ENCODE measurements at regions of chr1 and their contacts with region 1.

Region 1: DNA sequence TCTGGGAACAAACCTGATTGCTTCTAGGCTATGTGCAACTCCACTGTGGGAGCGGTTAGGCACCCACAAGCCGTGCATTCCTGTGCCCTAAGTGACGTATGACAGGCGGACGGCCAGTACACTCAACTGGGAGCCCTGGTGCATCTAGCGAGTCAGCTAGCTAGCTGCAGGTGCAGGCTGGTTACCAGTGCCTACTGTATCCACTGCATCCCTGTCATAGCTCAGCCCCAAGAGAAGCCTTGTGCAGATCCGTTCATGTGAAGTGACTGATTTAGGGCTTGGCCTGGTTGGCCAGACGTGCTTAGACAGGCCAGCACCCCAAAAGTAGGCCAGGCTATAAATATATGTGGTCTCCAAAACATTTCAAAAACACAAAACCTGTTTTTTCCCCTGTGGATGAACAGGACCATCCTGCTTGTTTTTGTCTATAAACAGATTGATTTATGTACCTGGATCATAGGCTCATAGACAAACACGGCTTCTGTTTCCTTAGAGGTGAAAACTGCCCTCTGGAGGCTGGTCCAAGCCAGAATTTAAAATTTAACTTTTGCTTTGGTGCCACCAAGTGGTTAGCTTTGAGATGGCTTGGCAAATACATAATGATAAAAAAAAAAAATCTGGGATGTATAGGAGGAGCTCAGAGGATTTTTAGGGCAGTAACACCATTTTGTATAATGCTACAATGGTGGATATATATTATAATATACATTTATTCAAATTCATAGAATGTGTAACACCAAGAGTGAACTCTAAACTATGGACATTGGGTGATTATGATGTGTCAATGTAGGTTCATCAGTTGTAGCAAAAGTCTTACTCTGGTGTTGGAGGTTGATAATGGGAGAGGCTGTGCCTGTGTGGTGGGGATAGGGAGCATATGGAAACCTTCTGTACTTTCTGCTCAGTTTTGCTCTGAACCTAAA is 68.5 kb downstream of the GIPC2 start:
- DNase-seq: peak; percentile 73
- H3K4me3 ChIP-seq: no peak overlapping the region
- H3K27ac ChIP-seq: peak overlapping the region; percentile 38
- H3K4me1 ChIP-seq: peaks cover 16% of the 10 kb centered on the region
- H3K27me3 ChIP-seq: no peaks in the 10 kb centered on the region
- CTCF ChIP-seq: peak; percentile 63 to 89

Region 2: DNA sequence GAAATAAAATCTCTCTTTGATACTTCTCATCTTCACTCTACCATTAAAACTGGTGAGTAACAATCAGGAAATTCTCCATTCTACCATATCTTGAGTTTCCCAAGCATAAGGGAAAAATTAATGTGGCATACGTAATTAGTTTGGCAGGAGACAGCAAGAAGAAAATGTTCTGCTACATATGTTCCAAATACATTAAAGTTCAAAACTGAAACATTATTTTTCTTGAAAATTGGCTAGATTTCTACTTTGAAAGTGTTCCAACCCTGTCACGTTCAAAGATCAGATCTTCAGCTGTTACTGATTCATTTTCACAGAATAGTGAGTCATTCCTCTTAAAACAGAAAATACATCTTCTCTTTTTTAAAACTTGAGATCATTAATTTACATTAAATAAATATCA is 943.6 kb before region 1 on chr1:
- CTCF ChIA-PET with region 1: no interaction called
- dilution Hi-C with region 1: no loop called
- in situ Hi-C with region 1: loop called in 1 of 2 experiments (anchors 25 kb)
- intact Hi-C with region 1: no loop called
- DNase-seq: no peak
- H3K4me3 ChIP-seq: no peak overlapping the region
- H3K27ac ChIP-seq: no peak overlapping the region
- H3K4me1 ChIP-seq: no peaks in the 10 kb centered on the region
- H3K27me3 ChIP-seq: no peaks in the 10 kb centered on the region
- CTCF ChIP-seq: no peak

Region 3: GRCh38 chr1:77744576-77744975 is 369.7 kb before region 1 on chr1:
- CTCF ChIA-PET with region 1: no interaction called
- dilution Hi-C with region 1: no loop called
- in situ Hi-C with region 1: no loop called
- intact Hi-C with region 1: loop called (anchors 10 kb)
- DNase-seq: no peak
- H3K4me3 ChIP-seq: no peak overlapping the region
- H3K27ac ChIP-seq: no peak overlapping the region
- H3K4me1 ChIP-seq: no peaks in the 10 kb centered on the region
- H3K27me3 ChIP-seq: no peaks in the 10 kb centered on the region
- CTCF ChIP-seq: peak in 1 of 2 donors; percentile 20

Region 4: DNA sequence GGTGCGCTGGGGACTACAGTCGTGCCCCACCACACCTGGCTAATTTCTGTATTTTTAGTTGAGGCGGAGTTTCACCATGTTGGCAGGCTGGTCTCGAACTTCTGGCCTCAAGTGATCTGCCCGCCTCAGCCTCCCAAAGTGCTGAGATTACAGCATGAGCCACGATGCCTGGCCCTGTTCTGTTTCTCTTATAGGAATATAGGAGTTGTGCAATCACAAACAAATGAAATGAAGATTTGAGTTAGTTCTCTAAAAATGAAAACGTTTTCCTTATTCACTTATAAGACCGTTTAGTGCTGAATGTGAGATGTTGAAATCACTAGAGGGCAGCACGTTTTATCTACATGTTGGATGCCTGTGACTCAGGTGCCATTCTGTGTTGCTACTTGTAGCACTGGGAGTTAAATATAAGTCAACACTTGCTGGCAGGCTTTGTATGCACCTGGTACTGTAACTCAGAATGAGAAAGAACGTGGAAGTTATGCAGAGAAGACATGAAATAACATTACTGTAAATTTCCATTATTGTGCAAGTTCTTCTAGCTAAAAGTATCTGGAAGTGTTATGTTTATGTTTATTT is 289.1 kb before region 1 on chr1:
- CTCF ChIA-PET with region 1: no interaction called
- dilution Hi-C with region 1: no loop called
- in situ Hi-C with region 1: loop called in 1 of 2 experiments (anchors 25 kb)
- intact Hi-C with region 1: loop called (anchors 1 kb)
- DNase-seq: peak; percentile 95
- H3K4me3 ChIP-seq: no peak overlapping the region
- H3K27ac ChIP-seq: peak overlapping the region; percentile 69
- H3K4me1 ChIP-seq: peaks cover 18% of the 10 kb centered on the region
- H3K27me3 ChIP-seq: no peaks in the 10 kb centered on the region
- CTCF ChIP-seq: peak; percentile 8 to 47

Region 5: DNA sequence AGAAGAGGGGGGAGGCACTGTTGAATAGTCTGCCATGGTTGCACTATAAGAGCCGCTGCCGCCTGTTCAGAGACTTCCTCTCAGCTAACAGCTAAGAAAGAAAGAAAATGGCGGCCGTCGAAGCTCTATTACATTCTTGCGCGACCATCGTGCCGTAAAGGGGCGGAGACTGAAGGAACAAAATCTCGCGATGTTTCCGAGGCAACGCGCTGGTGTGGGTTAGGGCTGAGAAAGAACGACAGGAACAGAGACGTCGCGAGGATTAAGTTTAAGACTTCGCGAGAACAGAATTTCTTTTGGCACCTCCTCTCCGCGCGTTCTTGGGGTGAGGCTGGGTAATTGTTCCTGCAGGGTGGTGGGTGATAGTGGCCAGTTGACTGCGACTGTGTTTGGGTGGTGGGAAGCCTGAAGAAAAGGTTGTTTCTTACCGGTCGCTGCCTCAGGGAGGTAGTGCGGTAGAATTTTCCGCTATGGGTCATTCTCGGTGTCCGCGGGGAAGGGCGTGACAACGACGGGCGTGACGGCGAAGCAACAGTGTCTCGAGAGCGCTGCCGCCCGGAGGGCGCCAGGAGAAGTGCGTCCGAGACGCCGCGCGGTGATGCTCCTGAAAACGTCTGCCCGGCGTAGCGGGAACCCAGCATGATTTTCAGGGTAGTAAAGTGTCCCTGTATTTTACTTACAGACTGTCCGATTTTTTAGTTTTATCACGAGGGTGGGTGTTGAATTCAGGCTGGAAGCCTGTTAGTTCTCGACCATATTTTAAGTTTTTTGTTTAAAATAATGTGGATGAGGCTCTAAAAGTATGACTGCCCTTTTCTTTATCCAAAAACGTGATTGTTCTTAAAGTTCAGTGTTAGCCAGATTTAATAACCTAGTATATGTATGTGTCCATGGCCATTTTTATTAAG is 135.1 kb before region 1 on chr1 and contains the start of gene FUBP1:
- CTCF ChIA-PET with region 1: interaction called, 3 read pairs
- dilution Hi-C with region 1: no loop called
- in situ Hi-C with region 1: loop called in 1 of 2 experiments (anchors 5 kb)
- intact Hi-C with region 1: loop called (anchors 1 kb)
- DNase-seq: peak; percentile 98
- H3K4me3 ChIP-seq: peak within 1 kb of the TSS; percentile 57 to 93 (median 75)
- H3K27ac ChIP-seq: peak within 1 kb of the TSS; percentile 99
- H3K4me1 ChIP-seq: peaks cover 31% of the 10 kb centered on the region
- H3K27me3 ChIP-seq: no peaks in the 10 kb centered on the region
- CTCF ChIP-seq: peak; percentile 47 to 75
- total RNA-seq, gene FUBP1: 85.9 to 113 TPM

Region 6: DNA sequence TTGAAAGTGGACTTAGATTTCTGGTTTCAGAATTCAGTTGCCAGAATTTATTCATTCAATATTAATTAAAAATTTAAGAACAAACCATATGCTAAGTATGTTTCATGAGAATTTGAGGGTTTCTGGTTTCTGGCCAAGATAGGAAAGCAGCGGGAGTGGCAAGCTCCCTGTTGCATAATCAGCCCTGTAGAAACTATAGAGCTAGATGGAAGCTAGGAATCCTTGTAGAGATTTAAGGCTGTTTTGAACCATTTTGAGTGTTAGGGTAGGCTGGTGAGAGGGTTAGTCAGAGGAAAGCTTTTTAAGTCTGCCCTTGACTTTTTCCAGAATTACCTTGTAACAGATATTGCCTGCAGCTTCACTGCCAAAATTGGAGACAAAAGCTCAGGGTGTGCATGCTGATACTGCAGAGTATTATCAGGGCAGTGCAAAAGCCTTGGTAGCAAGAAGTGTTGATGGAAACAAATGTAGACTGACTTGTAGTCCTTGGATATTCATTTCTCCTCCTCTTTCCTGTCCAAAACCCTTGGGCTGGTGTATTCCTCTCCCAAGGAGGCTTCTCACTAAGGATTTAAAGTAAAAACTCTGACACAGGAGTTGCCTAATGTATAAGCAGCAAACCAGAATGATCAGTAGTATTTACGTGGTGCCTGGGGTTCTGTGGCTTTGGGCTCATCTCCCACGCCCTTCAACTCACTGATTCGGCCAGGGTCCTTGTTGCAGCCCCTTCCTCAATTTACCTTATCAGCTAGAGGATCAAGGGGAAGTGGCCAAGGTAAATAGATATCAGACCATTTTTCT is 81.1 kb before region 1 on chr1:
- CTCF ChIA-PET with region 1: interaction called, 5 read pairs
- dilution Hi-C with region 1: loop called (anchors 5 kb)
- in situ Hi-C with region 1: no loop called
- intact Hi-C with region 1: no loop called
- DNase-seq: no peak
- H3K4me3 ChIP-seq: no peak overlapping the region
- H3K27ac ChIP-seq: no peak overlapping the region
- H3K4me1 ChIP-seq: peaks cover 14% of the 10 kb centered on the region
- H3K27me3 ChIP-seq: no peaks in the 10 kb centered on the region
- CTCF ChIP-seq: no peak

Region 7: GRCh38 chr1:78254517-78254916 is 140.2 kb after region 1 on chr1:
- CTCF ChIA-PET with region 1: no interaction called
- dilution Hi-C with region 1: no loop called
- in situ Hi-C with region 1: no loop called
- intact Hi-C with region 1: no loop called
- DNase-seq: peak; percentile 89
- H3K4me3 ChIP-seq: no peak overlapping the region
- H3K27ac ChIP-seq: no peak overlapping the region
- H3K4me1 ChIP-seq: peaks cover 12% of the 10 kb centered on the region
- H3K27me3 ChIP-seq: no peaks in the 10 kb centered on the region
- CTCF ChIP-seq: no peak